ENCODE measurements at regions of chr19 and their contacts with region 1.

Region 1: GRCh38 chr19:19404879-19405860 is at the start of gene GATAD2A:
- DNase-seq: peak; percentile 92
- H3K4me3 ChIP-seq: peak within 1 kb of the TSS; percentile 60 to 80 (median 67)
- H3K27ac ChIP-seq: peak within 1 kb of the TSS; percentile 48
- H3K4me1 ChIP-seq: peaks cover 47% of the 10 kb centered on the region
- H3K27me3 ChIP-seq: no peaks in the 10 kb centered on the region
- CTCF ChIP-seq: peak in 1 of 2 donors; percentile 48
- total RNA-seq, gene GATAD2A: 67.5 to 109 TPM

Region 2: DNA sequence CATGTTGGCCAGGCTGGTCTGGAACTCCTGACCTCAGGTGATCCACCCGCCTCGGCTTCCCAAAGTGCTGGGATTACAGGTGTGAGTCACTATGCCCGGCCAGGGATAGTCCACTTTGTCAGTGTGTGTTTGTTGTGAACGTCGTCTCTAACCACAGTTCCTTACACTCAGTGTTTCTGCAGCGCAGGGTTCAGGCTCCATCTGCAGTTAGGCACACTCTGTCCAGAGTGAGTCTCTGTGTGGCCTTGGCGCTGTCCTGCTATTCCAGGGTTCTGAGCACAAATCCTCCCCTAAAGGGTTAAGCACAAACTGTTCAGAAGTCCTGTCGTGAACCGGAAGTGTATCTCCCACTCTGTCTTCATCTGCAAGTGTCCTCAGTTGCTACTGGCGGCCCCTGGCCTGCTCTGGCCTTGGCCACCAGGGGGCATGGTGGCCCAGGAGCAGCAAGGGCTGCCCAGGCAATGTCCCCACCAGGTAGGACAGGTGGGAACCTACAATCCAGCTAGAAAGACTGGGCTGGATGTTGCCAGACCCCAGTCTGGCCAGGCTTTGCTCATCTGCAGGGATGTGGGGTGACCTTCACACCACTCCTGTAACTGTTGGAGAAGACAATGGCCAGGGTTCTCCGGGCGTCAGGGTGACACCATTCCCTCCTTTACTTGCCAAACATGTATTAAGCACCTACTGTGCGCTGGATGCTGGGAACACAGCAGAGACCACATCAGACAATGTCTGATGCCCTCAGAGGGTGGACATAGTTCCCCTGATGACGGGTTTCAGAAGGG is 38.4 kb before region 1 on chr19:
- CTCF ChIA-PET with region 1: no interaction called
- dilution Hi-C with region 1: no loop called
- in situ Hi-C with region 1: no loop called
- intact Hi-C with region 1: loop called (anchors 1 kb)
- DNase-seq: peak; percentile 78
- H3K4me3 ChIP-seq: no peak overlapping the region
- H3K27ac ChIP-seq: no peak overlapping the region
- H3K4me1 ChIP-seq: peaks cover 8% of the 10 kb centered on the region
- H3K27me3 ChIP-seq: no peaks in the 10 kb centered on the region
- CTCF ChIP-seq: peak; percentile 97 to 98

Region 3: GRCh38 chr19:19385108-19385899 is 19.9 kb before region 1 on chr19:
- CTCF ChIA-PET with region 1: interaction called, 7 read pairs
- dilution Hi-C with region 1: no loop called
- in situ Hi-C with region 1: no loop called
- intact Hi-C with region 1: loop called (anchors 1 kb)
- DNase-seq: peak; percentile 100
- H3K4me3 ChIP-seq: peak overlapping the region; percentile 84 to 85 (median 84)
- H3K27ac ChIP-seq: peak overlapping the region; percentile 31
- H3K4me1 ChIP-seq: peaks cover 27% of the 10 kb centered on the region
- H3K27me3 ChIP-seq: no peaks in the 10 kb centered on the region
- CTCF ChIP-seq: no peak

Measured in mammary epithelial cell (primary cell).